Prostate gland (tissue), 2 donors: ENCODE measurements at regions of chr20 and their contacts with region 1.

Region 1: GRCh38 chr20:48620519-48621254 is 207.1 kb downstream of the PREX1 start:
- DNase-seq: peak; percentile 88
- H3K4me3 ChIP-seq: peak overlapping the region in 1 of 2 donors; percentile 21
- H3K27ac ChIP-seq: no peak overlapping the region
- H3K4me1 ChIP-seq: peaks cover 2% of the 10 kb centered on the region
- H3K27me3 ChIP-seq: no peaks in the 10 kb centered on the region
- CTCF ChIP-seq: peak; percentile 80 to 97 (median 93)
- POLR2A ChIP-seq: no peak

Region 2: DNA sequence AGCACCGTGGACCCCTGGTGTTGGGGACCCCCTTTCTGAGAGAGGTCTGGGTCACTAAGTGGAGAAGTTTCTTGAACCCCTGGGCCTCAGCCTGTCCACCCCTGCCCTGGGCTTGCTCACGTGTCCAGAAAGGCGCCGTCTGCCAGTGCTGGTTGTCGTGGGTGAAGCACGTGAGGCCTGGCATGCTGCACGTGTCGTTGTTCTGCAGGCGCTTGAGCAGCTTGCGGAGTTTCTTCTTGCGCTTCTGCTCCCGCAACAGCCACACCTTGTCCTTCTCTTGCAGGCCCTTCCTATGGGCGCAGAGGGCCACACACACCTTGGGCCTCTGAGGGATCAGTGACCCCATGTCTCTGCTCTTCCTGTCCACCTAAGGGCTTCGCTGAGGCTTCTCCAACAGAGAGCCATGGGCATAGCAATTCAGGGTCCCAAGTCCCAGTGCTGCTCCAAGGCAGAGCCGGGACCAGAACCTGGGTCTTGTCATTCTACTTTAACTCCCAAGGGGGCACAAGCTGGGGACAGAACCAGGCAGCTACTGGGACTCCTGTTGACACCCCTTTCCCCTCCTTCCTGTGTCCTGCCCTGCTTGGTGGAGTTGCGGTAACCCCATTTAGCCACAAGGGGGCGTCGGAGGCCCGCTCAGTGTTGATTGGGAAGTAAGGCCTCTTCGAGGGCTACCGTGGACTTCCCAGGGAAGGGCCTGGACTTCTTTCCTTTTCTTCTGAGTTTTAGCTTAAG is 957.2 kb before region 1 on chr20:
- intact Hi-C with region 1: loop called (anchors 1 kb)
- DNase-seq: peak; percentile 60
- H3K4me3 ChIP-seq: no peak overlapping the region
- H3K27ac ChIP-seq: no peak overlapping the region
- H3K4me1 ChIP-seq: no peaks in the 10 kb centered on the region
- H3K27me3 ChIP-seq: no peaks in the 10 kb centered on the region
- CTCF ChIP-seq: peak; percentile 77 to 94 (median 90)
- POLR2A ChIP-seq: no peak

Region 3: GRCh38 chr20:47725248-47725973 is 895.3 kb before region 1 on chr20:
- intact Hi-C with region 1: loop called (anchors 5 kb)
- DNase-seq: peak; percentile 65
- H3K4me3 ChIP-seq: no peak overlapping the region
- H3K27ac ChIP-seq: no peak overlapping the region
- H3K4me1 ChIP-seq: no peaks in the 10 kb centered on the region
- H3K27me3 ChIP-seq: no peaks in the 10 kb centered on the region
- CTCF ChIP-seq: peak; percentile 75 to 87 (median 83)
- POLR2A ChIP-seq: no peak

Region 4: DNA sequence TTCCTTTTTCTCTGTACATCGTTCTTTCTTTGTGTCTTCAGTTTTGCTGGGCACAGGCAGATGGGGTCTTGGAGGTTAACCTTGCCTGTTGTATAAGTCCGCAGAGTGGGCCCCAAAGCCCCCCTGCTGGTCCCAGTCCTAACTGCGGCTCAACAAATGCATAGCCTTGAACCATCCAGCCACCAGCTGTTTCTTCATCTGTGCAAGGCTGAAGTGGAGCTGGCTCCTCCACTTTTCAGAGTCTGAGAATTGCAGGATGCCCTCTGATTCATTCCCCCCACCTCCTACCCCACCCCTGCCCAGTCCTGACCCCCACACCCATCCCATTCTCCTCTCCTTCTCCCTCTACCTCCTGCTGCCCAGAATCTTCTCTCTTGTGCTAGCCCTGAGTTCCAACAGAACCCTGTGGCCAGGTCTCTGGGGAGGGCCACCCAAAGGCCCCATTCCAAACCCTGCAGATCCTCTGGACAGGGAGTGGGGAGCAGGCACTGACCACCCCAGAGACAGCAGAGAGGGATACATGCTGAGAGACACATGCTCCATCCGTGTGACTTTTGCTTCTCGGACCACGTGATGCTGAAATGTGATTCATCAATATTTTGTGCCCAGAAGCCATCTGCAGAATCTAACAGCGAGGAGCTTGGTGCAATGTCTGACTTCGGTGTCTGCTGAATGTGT is 448.9 kb before region 1 on chr20:
- intact Hi-C with region 1: loop called (anchors 10 kb)
- DNase-seq: no peak
- H3K4me3 ChIP-seq: no peak overlapping the region
- H3K27ac ChIP-seq: no peak overlapping the region
- H3K4me1 ChIP-seq: no peaks in the 10 kb centered on the region
- H3K27me3 ChIP-seq: peaks cover 10% of the 10 kb centered on the region
- CTCF ChIP-seq: no peak
- POLR2A ChIP-seq: no peak